Activated CD8-positive, alpha-beta T cell treated with anti-CD3 and anti-CD28 coated beads, Interleukin-2, amount 10 ng/mL, durations not matched to agents 7 days and 5 days (primary cell): ENCODE measurements at regions of chr17 and their contacts with region 1.

Region 1: GRCh38 chr17:35088881-35089585 is 25.5 kb upstream of the RFFL start:
- DNase-seq: peak; percentile 91
- ATAC-seq: peak; percentile 86
- H3K4me3 Mint-ChIP-seq: peak overlapping the region; percentile 88
- H3K27ac Mint-ChIP-seq: peak overlapping the region; percentile 95
- H3K4me1 Mint-ChIP-seq: peaks cover 45% of the 10 kb centered on the region
- H3K27me3 Mint-ChIP-seq: no peaks in the 10 kb centered on the region

Region 2: GRCh38 chr17:34930283-34930682 is 158.8 kb before region 1 on chr17:
- CTCF ChIA-PET with region 1: no interaction called
- POLR2A ChIA-PET with region 1: no interaction called
- DNase-seq: no peak
- ATAC-seq: no peak
- H3K4me3 Mint-ChIP-seq: no peak overlapping the region
- H3K27ac Mint-ChIP-seq: no peak overlapping the region
- H3K4me1 Mint-ChIP-seq: no peaks in the 10 kb centered on the region
- H3K27me3 Mint-ChIP-seq: peaks cover 9% of the 10 kb centered on the region

Region 3: GRCh38 chr17:34980681-34981537 is 108.1 kb before region 1 on chr17:
- CTCF ChIA-PET with region 1: interaction called, 19 read pairs
- POLR2A ChIA-PET with region 1: no interaction called
- DNase-seq: peak; percentile 85
- ATAC-seq: peak; percentile 89
- H3K4me3 Mint-ChIP-seq: peak overlapping the region; percentile 79
- H3K27ac Mint-ChIP-seq: peak overlapping the region; percentile 85
- H3K4me1 Mint-ChIP-seq: peaks cover 32% of the 10 kb centered on the region
- H3K27me3 Mint-ChIP-seq: no peaks in the 10 kb centered on the region

Region 4: GRCh38 chr17:34998205-34998604 is 90.8 kb before region 1 on chr17:
- CTCF ChIA-PET with region 1: interaction called, 62 read pairs
- POLR2A ChIA-PET with region 1: interaction called, 3 read pairs
- DNase-seq: peak; percentile 84
- ATAC-seq: peak; percentile 95
- H3K4me3 Mint-ChIP-seq: no peak overlapping the region
- H3K27ac Mint-ChIP-seq: peak overlapping the region; percentile 30
- H3K4me1 Mint-ChIP-seq: peaks cover 11% of the 10 kb centered on the region
- H3K27me3 Mint-ChIP-seq: no peaks in the 10 kb centered on the region

Region 5: GRCh38 chr17:35046740-35047283 is 42.2 kb before region 1 on chr17:
- CTCF ChIA-PET with region 1: interaction called, 11 read pairs
- POLR2A ChIA-PET with region 1: interaction called, 13 read pairs
- DNase-seq: peak; percentile 78
- ATAC-seq: peak; percentile 95
- H3K4me3 Mint-ChIP-seq: peak overlapping the region; percentile 69
- H3K27ac Mint-ChIP-seq: peak overlapping the region; percentile 83
- H3K4me1 Mint-ChIP-seq: peaks cover 49% of the 10 kb centered on the region
- H3K27me3 Mint-ChIP-seq: no peaks in the 10 kb centered on the region

Region 6: GRCh38 chr17:35069311-35069710 is 19.7 kb before region 1 on chr17:
- CTCF ChIA-PET with region 1: interaction called, 48 read pairs
- POLR2A ChIA-PET with region 1: interaction called, 11 read pairs
- DNase-seq: no peak
- ATAC-seq: no peak
- H3K4me3 Mint-ChIP-seq: no peak overlapping the region
- H3K27ac Mint-ChIP-seq: no peak overlapping the region
- H3K4me1 Mint-ChIP-seq: peaks cover 55% of the 10 kb centered on the region
- H3K27me3 Mint-ChIP-seq: no peaks in the 10 kb centered on the region